Activated CD4-positive, alpha-beta T cell treated with anti-CD3 and anti-CD28 coated beads, Interleukin-2, amount 10 ng/mL, durations not matched to agents 24 days and 14 days (primary cell): ENCODE measurements at regions of chr19 and their contacts with region 1.

Region 1: DNA sequence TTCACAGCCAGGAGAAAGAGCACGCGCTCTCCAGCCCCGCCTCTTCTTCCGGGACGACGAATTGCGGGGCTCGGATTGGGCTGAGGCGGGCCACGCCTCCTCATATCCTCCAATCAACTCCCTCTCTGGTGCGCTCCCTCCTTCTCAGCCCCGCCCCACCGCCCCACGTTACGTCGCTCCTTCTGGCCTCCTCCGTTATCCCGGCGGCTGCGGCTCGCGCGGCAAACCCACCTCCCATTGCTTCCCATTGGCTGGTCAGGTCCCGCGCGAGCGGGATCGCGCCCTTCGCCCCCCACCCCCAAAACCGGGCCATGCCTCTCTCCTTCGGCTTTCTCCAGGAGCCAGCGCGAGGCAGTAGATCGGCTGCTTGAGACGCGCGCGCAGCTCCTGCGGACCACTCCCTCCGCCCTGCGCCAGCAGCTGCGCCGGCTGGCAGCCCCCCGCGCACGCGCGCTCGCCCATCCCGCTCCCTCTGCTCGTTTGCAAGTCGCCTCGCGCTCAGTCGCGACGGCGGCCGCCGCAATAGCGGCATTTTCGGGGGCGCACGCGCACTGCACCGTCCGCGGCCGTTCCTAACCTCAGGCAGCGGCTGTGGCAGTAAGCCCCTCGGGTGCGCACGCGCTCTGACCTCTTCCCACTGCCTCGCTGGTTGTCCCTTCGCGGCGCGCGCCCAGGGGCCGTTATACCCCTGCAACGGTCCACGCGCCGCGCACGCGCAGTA is 512 bp upstream of the ARHGAP35 start:
- DNase-seq: peak; percentile 99
- H3K4me3 Mint-ChIP-seq: peak overlapping the region; percentile 85
- H3K27ac Mint-ChIP-seq: peak overlapping the region; percentile 91
- H3K4me1 Mint-ChIP-seq: peaks cover 19% of the 10 kb centered on the region
- H3K27me3 Mint-ChIP-seq: no peaks in the 10 kb centered on the region

Region 2: DNA sequence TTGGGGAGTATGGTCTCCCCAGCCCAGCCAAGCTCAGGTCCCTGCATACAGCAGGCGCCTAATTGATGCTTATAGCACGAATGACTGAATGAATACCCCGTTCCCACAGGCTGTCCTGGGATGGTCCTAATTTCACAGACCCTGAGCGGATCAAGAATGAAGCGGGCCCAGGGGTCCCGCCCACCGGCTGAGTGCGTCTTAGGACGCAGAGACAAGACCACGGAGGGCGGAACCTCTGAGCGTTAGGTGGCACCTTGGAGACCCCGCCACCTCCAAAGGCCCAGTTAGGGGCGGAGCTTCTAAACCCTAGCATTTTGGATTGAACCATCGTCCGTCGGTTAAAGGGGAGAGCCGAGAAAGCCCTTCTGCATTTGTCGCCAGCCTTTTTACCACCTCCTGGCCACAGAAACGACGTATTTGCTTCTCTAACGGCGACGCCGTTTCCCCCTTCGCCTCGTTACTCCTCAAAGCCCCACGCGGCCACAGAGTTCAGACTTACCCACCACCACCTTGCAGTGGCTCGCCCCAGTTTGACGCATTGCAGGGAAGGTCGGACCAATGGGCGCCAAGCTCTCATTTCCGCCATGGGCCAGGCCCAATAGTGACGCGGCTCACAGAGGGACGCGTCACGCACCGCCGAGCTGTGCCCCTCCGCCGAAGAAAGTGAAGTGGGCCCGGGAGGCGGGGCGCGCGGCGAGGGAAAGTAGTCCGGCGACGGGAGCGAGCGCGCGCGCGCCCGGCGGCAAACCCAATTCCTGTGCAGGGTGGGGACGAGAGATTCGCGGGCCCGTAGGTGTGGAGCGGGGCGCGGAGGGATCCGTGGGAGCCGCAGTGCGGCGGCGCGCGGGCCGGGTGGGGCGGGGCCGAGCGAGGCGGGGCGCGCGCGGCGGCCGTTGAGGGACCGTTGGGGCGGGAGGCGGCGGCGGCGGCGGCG is 259.6 kb before region 1 on chr19:
- intact Hi-C with region 1: no loop called
- DNase-seq: peak; percentile 99
- H3K4me3 Mint-ChIP-seq: peak overlapping the region; percentile 97
- H3K27ac Mint-ChIP-seq: peak overlapping the region; percentile 100
- H3K4me1 Mint-ChIP-seq: peaks cover 18% of the 10 kb centered on the region
- H3K27me3 Mint-ChIP-seq: no peaks in the 10 kb centered on the region

Region 3: DNA sequence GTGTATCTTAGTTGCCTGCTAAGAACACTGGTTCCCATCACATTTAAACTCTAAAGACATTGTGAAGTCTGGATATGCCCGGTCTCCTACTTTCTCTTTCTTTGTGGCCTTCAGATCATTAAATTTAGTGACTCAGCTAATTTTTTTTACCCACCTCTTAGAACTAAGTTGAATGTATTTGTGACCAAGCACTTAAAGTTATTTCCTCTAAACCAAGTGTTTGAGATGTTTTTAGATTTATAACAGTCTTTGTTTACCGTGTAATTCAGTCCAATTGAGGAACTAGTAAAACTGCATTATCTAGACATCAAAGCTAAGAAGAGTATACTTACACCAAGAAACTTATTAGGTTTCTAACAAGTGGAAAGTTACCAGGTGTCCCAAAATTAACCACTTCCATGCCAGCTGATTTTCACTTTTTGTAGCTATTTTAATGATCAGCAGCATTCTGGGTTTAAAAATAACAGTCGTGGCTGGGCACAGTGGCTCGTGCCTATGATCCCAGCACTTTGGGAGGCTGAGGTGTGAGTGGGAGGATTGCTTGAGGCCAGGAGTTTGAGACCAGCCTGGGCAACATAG is 53.7 kb after region 1 on chr19:
- intact Hi-C with region 1: loop called (anchors 10 kb)
- DNase-seq: no peak
- H3K4me3 Mint-ChIP-seq: no peak overlapping the region
- H3K27ac Mint-ChIP-seq: no peak overlapping the region
- H3K4me1 Mint-ChIP-seq: peaks cover 28% of the 10 kb centered on the region
- H3K27me3 Mint-ChIP-seq: no peaks in the 10 kb centered on the region

Region 4: GRCh38 chr19:46932346-46932745 is 72.1 kb after region 1 on chr19:
- intact Hi-C with region 1: no loop called
- DNase-seq: no peak
- H3K4me3 Mint-ChIP-seq: no peak overlapping the region
- H3K27ac Mint-ChIP-seq: no peak overlapping the region
- H3K4me1 Mint-ChIP-seq: peaks cover 36% of the 10 kb centered on the region
- H3K27me3 Mint-ChIP-seq: no peaks in the 10 kb centered on the region

Region 5: GRCh38 chr19:46954993-46955812 is 94.9 kb after region 1 on chr19:
- intact Hi-C with region 1: loop called (anchors 2 kb)
- DNase-seq: peak; percentile 84
- H3K4me3 Mint-ChIP-seq: peak overlapping the region; percentile 81
- H3K27ac Mint-ChIP-seq: peak overlapping the region; percentile 94
- H3K4me1 Mint-ChIP-seq: peaks cover 67% of the 10 kb centered on the region
- H3K27me3 Mint-ChIP-seq: no peaks in the 10 kb centered on the region

Region 6: DNA sequence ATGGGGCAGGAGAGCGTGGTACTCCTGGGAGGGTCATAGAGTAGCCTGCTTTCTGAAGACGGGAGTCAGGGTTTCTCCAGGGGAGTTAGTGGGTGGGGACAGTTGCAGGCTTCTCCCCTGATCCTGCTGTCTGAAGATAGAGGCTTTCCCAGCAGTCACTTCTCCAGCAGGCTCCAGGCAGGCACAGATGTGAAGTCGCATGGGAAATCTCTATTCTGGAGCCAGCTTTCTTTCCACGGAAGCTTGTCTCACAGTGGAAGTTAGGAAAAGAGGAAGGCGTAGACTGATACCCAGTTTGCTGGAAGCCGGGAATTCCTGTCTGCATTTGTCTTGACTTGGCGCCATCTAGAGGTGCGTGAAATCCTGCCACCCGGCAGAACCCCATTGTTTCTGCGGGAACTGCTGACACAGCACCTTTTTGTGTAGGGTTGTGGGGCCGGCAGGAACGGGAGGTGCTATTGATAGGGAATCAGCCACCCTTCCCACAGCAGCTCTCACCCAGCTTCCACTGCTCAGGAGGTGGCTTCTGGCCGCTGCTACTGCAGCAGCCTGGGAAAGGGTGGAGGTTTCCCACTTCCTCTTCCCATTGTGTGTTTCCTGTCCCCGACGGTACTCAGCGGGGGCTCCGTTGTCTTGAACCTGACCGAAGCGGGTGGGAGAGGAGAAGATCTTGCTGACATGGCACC is 130.8 kb after region 1 on chr19:
- intact Hi-C with region 1: loop called (anchors 2 kb)
- DNase-seq: peak; percentile 87
- H3K4me3 Mint-ChIP-seq: no peak overlapping the region
- H3K27ac Mint-ChIP-seq: peak overlapping the region; percentile 63
- H3K4me1 Mint-ChIP-seq: peaks cover 11% of the 10 kb centered on the region
- H3K27me3 Mint-ChIP-seq: no peaks in the 10 kb centered on the region

Region 7: GRCh38 chr19:47348819-47349795 is 488.8 kb after region 1 on chr19 and contains the start of gene DHX34:
- intact Hi-C with region 1: loop called (anchors 1 kb)
- DNase-seq: peak; percentile 100
- H3K4me3 Mint-ChIP-seq: peak within 1 kb of the TSS; percentile 90
- H3K27ac Mint-ChIP-seq: peak within 1 kb of the TSS; percentile 86
- H3K4me1 Mint-ChIP-seq: peaks cover 28% of the 10 kb centered on the region
- H3K27me3 Mint-ChIP-seq: no peaks in the 10 kb centered on the region
- total RNA-seq, gene DHX34: 31.3 and 32.4 TPM in 2 replicates